Dendritic cell treated with granulocyte-macrophage colony-stimulating factor and Interleukin-4, amounts not matched to agents 40 ng/mL and 50 ng/mL, for 4 days (primary cell): ENCODE measurements at regions of chr9 and their contacts with region 1.

Region 1: DNA sequence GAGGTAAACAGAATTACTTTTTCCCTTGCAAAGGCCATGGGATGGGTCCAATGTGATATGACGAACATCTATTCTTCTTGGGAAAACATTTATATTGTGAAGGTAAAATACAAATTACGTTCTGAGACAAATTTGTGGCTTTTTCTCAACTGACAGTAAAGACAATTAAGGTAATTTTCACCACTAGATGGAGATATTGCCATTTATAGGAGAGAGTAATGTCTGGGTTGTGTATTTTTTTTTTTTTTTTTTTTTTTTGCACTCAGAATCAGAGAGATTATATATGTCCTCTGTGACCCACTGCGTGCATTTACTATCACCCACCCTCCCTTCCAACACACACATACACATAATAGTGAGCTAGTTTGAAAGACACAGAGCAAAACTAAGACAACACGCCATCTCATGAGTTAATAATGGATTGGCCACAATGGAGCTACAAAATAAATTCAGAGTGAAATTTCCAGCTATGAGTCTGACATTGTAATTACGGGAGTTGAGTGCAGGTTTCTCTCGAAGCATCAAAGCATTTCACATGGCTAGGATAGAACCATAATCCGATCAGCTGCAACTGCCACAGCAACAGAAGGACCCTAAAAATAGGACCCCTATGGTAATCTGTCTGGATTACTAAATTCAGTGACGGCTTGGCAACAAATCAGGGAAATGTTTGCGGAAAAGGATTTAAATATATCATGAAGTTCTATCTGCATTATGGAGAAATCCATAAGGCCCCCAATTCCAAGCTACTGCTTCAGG is 49.2 kb downstream of the ANXA1 start:
- H3K4me3 Mint-ChIP-seq: no peak overlapping the region
- H3K27ac Mint-ChIP-seq: no peak overlapping the region
- H3K4me1 Mint-ChIP-seq: peaks cover 20% of the 10 kb centered on the region
- H3K27me3 Mint-ChIP-seq: no peaks in the 10 kb centered on the region

Region 2: DNA sequence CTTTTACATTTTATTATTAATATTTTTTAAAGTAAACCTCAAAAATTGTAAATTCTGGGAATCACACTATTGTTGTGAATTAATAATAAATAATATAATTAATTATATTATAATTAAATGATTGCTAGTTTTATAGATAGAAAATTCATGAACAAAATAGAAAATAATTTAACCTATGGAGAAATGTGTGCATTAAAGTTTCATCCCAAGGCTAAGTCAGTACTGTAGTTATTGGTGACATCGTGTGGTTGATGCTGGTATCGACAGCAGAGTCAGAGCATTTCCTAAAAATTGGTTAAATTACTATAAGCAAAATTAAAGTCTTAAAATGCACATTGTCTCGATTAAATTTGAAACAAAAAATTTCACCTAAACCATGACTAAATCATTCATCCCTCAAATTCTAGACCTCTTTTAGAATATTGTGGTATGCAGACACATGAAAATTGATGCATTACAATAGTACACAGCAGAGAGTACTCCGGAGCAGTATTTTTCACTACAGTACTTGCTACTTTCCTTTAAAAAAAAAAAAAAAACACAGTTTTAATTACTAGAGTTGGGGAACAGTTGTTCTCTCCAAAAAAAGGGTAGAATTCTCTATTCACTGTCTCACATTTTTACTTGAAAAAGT is 1370.1 kb after region 1 on chr9:
- intact Hi-C with region 1: loop called (anchors 2 kb)
- H3K4me3 Mint-ChIP-seq: no peak overlapping the region
- H3K27ac Mint-ChIP-seq: no peak overlapping the region
- H3K4me1 Mint-ChIP-seq: no peaks in the 10 kb centered on the region
- H3K27me3 Mint-ChIP-seq: peaks cover 3% of the 10 kb centered on the region

Region 3: GRCh38 chr9:74645007-74645639 is 1444.2 kb after region 1 on chr9:
- intact Hi-C with region 1: loop called (anchors 2 kb)
- H3K4me3 Mint-ChIP-seq: no peak overlapping the region
- H3K27ac Mint-ChIP-seq: no peak overlapping the region
- H3K4me1 Mint-ChIP-seq: no peaks in the 10 kb centered on the region
- H3K27me3 Mint-ChIP-seq: no peaks in the 10 kb centered on the region

Region 4: DNA sequence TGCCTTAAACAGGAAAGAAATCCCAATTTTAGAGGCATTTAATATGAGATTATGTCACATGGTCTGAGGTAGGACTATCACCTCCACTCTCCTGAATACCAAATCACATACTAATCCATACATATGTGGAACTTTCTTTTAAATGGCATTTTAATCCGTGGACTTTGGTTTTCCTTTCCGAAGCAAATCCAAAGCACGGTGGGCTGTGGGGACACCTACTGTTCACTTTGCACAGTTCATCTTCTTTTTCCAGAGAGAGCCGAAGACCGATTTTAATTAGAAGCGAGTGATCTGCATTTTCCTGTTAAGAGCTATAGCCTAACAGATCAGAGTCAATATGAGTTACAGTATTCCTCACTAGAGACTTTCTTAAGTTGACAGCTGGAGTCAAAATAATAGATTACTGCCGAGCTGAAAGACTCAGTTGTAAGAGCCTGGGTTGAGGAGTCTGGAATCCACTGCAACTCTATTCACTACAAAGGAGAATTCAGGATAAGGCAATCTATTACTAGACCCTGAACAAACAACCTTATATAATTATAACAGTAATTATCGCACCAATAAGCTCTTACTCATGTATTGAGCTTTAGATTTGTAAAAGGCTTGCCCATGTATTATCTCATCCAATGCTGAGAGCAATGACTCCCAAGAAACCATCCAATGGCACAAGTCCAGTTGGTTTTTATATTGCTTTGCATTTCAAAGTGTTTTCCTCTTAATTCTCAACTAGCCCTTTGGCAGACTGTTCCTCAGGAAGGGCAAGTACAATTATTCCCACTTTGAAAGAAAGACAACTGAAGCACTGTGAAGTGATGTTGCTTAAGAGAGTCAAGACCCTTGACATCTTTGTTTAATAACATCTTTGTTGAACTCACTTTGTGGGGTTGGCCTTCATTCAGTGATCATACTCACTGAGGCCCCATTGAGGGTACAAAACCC is 1542.2 kb after region 1 on chr9:
- intact Hi-C with region 1: loop called (anchors 5 kb)
- H3K4me3 Mint-ChIP-seq: no peak overlapping the region
- H3K27ac Mint-ChIP-seq: no peak overlapping the region
- H3K4me1 Mint-ChIP-seq: no peaks in the 10 kb centered on the region
- H3K27me3 Mint-ChIP-seq: peaks cover 4% of the 10 kb centered on the region